PC-9 (cell line): ENCODE measurements at regions of chr1 and their contacts with region 1.

Region 1: DNA sequence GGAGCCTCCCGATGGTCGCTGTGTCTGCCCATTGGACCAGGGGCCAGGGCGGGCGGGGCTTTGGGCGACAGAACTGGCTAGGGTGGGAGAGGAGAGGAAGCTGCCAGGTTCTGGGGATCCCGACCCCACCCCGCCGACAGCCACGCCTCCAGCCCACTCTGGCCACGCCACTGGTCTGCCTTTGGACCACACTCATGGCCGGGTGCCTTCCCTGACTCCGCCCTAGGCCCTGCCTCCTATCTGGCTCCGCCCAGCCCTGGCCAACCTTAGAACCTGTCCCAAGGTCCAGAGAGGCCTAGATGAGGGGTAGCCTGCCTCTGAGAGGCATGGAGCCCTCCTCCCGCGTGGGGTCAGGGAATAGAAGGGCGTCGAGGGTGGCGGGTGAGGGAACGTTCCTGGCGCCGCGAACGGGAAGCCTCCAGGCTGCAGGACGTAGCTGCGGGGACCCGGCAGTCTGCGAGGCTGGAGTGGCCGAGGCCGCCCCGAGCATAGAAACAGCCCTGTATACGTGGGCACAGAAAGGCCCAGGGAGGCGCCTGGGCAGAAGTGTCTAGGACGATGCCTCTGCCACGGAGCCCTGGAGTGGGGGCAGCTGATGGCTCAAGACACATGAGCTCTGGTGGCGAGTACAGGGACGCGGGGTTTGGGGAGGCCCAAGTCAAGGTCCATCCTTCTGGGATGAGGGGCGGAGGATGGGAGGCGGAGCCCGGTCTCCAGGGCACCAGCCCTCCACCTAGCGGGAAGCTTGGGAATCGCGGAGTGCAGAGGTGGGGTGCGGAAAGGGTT is 11.5 kb upstream of the COL16A1 start:
- DNase-seq: peak; percentile 90 to 93
- H3K4me3 ChIP-seq: peak overlapping the region; percentile 59
- H3K27ac ChIP-seq: no peak overlapping the region
- H3K4me1 ChIP-seq: peaks cover 45% of the 10 kb centered on the region
- H3K27me3 ChIP-seq: peaks cover 7% of the 10 kb centered on the region; the same call in 1 of the 2 replicates
- CTCF ChIP-seq: peak; percentile 98

Region 2: DNA sequence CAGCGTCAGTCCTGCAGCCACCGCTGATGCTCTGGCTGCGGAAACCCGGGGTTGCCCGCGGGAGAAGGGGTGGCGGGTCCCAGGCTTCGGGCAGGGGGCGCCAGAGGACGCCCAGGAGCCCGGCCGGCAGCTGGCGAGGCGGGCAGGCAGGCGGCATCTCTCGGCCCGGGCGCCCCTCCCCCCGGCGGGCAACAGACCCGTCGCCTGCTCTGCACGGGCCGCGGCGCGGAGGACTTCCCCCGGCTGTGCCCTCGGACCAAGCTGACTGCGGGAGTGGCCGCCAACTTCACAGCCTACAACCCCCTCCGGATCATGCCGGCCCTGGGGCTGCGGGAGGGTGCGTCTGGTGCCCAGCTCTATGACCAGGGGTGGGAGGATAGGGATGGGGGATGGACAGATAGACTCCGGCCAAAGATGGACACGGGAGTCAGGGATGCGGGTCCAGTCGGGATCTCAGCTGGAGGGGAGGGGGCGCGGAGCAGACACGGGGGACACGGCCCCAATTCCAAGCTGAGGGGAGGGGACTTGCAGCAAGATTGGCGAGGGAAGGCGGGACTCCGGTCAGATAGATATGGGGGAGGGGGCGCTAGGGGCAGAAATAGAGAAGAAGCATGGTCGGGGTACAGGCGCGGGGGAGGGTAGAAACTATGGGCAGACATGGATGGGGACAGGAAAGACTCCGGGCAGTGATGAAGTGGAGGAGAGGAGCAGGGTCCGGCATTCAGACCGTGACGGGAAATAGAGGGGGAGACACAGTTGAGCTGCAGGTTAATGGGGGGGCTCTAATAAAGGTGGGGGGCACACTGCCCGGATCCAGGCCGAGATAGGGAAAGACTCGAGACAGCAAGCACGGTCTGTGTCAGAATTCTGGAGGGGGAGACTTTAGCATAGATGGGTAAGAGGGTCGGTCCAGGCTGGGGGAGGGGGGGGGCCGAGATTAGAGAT is 47.7 kb after region 1 on chr1:
- CTCF ChIA-PET with region 1: interaction called, 3 read pairs
- POLR2A ChIA-PET with region 1: no interaction called
- intact Hi-C with region 1: loop called (anchors 5 kb)
- DNase-seq: peak; percentile 65 to 88
- H3K4me3 ChIP-seq: peak overlapping the region; percentile 62
- H3K27ac ChIP-seq: no peak overlapping the region
- H3K4me1 ChIP-seq: peaks cover 32% of the 10 kb centered on the region
- H3K27me3 ChIP-seq: peaks cover 5% of the 10 kb centered on the region; the same call in 1 of the 2 replicates
- CTCF ChIP-seq: peak; percentile 90